ENCODE measurements at regions of chr7 and their contacts with region 1.

Region 1: GRCh38 chr7:157009768-157010587 is 485 bp downstream of the MNX1 start:
- DNase-seq: no peak
- ATAC-seq: peak; percentile 38
- H3K4me3 Mint-ChIP-seq: peak overlapping the region; percentile 50
- H3K27ac Mint-ChIP-seq: no peak overlapping the region
- H3K4me1 Mint-ChIP-seq: peaks cover 23% of the 10 kb centered on the region
- H3K27me3 Mint-ChIP-seq: peaks cover 54% of the 10 kb centered on the region
- CTCF ChIP-seq: no peak

Region 2: GRCh38 chr7:155456738-155457564 is 1553.0 kb before region 1 on chr7:
- CTCF ChIA-PET with region 1: no interaction called
- POLR2A ChIA-PET with region 1: no interaction called
- intact Hi-C with region 1: loop called (anchors 5 kb)
- DNase-seq: no peak
- ATAC-seq: peak; percentile 47
- H3K4me3 Mint-ChIP-seq: peak overlapping the region; percentile 64
- H3K27ac Mint-ChIP-seq: no peak overlapping the region
- H3K4me1 Mint-ChIP-seq: peaks cover 26% of the 10 kb centered on the region
- H3K27me3 Mint-ChIP-seq: peaks cover 49% of the 10 kb centered on the region
- CTCF ChIP-seq: no peak

Region 3: DNA sequence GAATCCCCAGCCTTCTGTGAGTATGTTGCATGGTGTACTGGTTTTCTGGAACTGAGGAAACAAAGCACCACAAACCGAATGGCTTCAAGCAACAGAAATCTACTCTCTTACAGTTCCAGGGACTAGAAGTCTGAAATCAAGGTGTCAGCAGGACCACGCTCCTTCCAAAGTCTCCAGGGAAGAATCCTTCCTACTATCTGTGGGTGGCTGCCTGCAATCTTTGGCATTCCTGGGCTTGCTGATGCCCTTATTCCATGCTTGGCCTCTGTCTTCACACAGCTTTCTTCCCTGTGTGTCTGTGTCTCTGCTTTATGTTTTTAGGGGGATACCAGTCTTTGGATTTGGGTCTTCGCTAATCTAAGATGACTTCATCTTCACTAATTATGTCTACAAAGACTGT is 198.3 kb before region 1 on chr7:
- CTCF ChIA-PET with region 1: no interaction called
- POLR2A ChIA-PET with region 1: no interaction called
- intact Hi-C with region 1: no loop called
- DNase-seq: no peak
- ATAC-seq: no peak
- H3K4me3 Mint-ChIP-seq: no peak overlapping the region
- H3K27ac Mint-ChIP-seq: no peak overlapping the region
- H3K4me1 Mint-ChIP-seq: no peaks in the 10 kb centered on the region
- H3K27me3 Mint-ChIP-seq: no peaks in the 10 kb centered on the region
- CTCF ChIP-seq: no peak

Region 4: DNA sequence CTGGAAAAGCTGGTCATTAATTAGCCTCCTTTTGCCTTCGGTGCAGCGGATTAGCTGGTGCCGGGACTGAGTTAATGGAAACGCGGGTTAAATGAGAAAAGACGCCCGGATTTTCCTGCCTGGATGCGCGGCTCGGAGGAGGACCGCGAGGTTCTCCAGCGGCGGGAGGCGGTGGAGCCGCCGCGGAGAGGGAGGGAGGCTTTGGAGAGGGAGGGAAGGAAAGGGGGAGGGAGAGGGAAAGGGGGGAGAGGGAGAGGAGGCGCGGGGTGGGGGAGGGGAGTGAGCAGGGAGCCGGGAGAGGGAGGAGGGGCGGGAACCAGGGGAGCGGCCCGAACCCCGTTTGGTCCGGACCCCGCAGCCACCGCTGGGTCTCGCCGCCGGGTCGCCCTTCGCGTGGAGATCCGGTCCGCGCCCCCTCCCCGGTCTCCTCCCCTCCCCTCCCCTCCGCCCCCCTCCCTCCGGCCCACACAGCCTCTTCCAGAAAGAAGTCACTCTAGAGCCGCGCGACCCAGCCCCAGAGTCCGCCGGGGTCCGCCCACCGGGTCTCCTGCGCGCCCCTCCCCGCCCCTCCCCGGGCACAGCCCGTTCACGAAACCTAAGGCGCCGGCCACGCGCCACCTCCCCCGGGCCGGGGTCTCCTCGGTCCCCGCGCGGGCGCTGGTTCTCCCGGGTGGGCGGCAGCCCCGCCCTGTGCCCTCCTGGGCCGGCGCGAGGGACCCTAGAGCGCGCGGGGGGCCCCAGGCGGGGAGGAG is 674.4 kb after region 1 on chr7:
- CTCF ChIA-PET with region 1: no interaction called
- POLR2A ChIA-PET with region 1: no interaction called
- intact Hi-C with region 1: loop called (anchors 10 kb)
- DNase-seq: no peak
- ATAC-seq: no peak
- H3K4me3 Mint-ChIP-seq: no peak overlapping the region
- H3K27ac Mint-ChIP-seq: no peak overlapping the region
- H3K4me1 Mint-ChIP-seq: no peaks in the 10 kb centered on the region
- H3K27me3 Mint-ChIP-seq: peaks cover 60% of the 10 kb centered on the region
- CTCF ChIP-seq: no peak